Mucosa of descending colon (tissue), 3 donors: ENCODE measurements at regions of chr15 and their contacts with region 1.

Region 1: GRCh38 chr15:90886041-90886614 is 1.8 kb downstream of the FES start:
- DNase-seq: peak; percentile 82 to 87 (median 86)
- ATAC-seq: peak; percentile 71
- H3K4me3 ChIP-seq: no peak overlapping the region
- H3K4me1 ChIP-seq: peaks cover 15% of the 10 kb centered on the region
- CTCF ChIP-seq: peak; percentile 98

Region 2: GRCh38 chr15:90529371-90530249 is 356.5 kb before region 1 on chr15 and contains the start of gene CRTC3:
- intact Hi-C with region 1: loop called in 1 of 2 experiments (anchors 10 kb)
- DNase-seq: peak; percentile 58 to 75 (median 70)
- ATAC-seq: peak; percentile 95
- H3K4me3 ChIP-seq: peak within 1 kb of the TSS; percentile 53
- H3K4me1 ChIP-seq: no peaks in the 10 kb centered on the region
- CTCF ChIP-seq: no peak
- total RNA-seq, gene CRTC3: 21.6 to 53.6 (median 21.7) TPM

Region 3: DNA sequence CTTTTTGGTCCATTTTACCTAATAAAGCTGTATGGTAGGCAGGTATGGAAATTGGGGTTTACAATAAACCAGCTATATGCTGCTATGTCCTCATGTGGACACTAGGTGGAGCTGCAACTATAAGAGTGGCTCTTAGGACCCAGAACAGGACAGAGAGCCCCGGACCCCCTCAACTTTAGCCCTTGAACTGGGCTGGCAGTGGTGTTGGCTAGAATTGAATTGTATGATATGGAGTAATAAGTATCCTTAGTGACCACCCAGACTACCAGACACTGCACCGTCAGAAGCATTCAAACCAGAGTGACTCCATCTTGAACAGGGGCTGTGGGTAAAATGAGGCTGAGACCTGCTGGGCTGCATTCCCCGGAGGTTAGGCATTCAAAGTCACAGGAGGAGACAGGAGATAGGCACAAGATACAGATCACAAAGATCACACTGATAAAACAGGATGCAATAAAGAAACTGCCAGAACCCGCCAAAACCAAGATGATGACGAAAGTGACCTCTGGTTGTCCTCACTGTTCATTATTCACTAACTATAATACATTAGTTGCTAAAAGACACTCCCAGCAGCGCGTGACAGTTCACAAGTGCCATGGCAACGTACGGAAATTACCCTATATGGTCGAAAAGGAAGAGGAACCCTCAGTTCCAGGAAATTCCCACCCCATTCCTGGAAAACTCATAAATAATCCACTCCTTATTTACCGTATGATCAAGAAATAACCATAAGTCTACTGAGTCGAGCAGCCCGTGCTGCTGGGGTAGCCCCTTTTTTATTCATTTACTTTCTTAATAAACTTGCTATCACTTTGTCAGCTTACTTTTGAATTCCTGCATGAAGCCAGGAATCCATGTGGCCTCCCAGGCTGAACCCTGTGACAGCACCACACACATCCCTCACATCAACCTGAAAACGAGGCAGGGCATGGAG is 237.7 kb before region 1 on chr15:
- intact Hi-C with region 1: loop called (anchors 5 kb)
- DNase-seq: peak in 2 of 3 donors; percentile 70 to 84
- ATAC-seq: peak; percentile 83
- H3K4me3 ChIP-seq: no peak overlapping the region
- H3K4me1 ChIP-seq: peaks cover 9% of the 10 kb centered on the region
- CTCF ChIP-seq: peak; percentile 71

Region 4: GRCh38 chr15:90691982-90692773 is 193.9 kb before region 1 on chr15:
- intact Hi-C with region 1: loop called in 1 of 2 experiments (anchors 10 kb)
- DNase-seq: no peak
- ATAC-seq: no peak
- H3K4me3 ChIP-seq: no peak overlapping the region
- H3K4me1 ChIP-seq: no peaks in the 10 kb centered on the region
- CTCF ChIP-seq: no peak

Region 5: DNA sequence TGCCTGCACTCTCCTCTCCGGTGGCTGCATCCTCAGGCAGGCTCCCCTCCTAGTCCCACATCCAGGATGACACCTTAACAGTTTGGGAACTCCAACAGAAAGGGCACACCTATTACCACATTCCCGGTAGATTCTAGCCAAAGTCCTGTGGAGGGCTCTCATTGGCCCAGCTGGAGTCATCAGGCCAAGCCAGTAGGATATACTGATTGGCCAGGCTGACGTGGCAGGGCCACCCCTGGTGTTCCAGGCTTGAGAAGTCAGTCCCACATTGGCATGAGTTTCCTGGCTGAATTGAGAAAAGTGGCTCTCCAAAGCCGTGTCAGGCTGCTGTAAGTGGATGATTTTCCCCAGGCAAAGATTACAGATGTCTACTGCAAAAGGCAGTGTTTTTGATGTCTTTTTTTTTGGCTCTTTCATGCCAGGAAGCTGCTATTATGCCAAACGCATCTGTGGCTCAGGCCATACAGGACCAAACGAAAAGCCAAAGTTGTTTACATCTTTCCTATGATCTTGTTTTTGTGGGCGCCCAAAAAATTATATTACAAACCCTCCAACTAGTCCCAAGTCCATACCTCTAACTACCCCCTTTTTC is 175.6 kb before region 1 on chr15:
- intact Hi-C with region 1: no loop called
- DNase-seq: no peak
- ATAC-seq: no peak
- H3K4me3 ChIP-seq: no peak overlapping the region
- H3K4me1 ChIP-seq: no peaks in the 10 kb centered on the region
- CTCF ChIP-seq: no peak